ENCODE measurements at regions of chr5 and their contacts with region 1.

Region 1: DNA sequence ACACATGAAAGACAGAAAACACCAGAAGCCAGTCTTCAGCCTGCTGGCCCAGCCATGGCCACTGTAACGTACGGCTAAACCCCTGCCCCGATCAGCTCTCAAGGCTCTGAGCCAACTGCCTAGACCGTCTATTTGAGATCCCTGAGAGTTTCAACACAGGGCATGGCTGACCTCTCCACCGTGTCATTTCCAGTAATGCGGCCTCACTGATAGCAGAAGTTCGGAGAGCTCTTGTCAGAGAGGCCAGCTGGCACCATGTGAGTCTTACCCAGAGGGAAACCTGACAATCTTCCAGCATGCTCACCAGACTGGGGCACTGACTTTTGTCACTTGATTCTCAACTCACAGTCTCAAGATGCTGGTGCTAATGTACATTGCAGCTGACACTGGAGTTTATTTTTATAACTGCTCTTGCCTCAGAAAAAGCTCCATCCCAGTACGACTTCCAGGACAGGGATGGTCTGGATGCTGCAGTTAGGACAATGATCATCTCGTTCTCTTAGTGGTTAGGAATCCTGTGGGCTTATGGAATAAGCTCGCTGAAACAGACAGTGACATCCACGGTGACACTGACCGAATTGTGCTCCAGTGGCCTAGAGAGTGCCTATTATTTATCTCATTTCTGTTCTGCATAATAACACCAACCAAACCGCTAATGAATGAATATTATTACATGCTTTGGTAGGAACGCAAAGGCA is 372.7 kb downstream of the ICE1 start:
- DNase-seq: peak; percentile 55 to 92 (median 67)
- ATAC-seq: peak; percentile 89 to 98 (median 96)
- H3K4me3 ChIP-seq: no peak overlapping the region
- H3K27ac ChIP-seq: peak overlapping the region in 9 of 12 donors; percentile 15 to 74 (median 55)
- H3K4me1 ChIP-seq: peaks cover 0 to 27% (median 5%) of the 10 kb centered on the region in 12 donors
- H3K27me3 ChIP-seq: no peaks in the 10 kb centered on the region
- CTCF ChIP-seq: no peak
- POLR2A ChIP-seq: no peak

Region 2: DNA sequence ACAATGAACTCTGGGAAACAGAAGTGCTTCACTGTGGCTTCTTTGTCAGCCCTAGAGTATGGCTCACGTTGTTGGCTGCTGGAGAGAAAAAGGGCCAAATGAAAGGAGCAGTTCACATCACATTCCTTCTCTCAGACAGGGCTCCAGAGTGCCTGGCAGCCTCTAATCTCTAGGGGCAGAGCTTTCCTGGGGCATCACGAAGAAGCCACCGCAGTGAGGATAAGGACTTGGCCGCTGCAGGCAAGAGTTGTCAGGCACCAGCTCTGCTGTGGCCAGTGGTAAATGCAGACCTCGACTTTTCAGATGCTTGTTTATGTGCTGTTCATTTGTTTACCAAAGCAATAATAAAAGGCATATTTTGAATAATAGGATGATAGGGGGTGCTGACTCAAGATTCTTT is 145.6 kb before region 1 on chr5:
- intact Hi-C with region 1: loop called in 1 of 10 experiments (anchors 10 kb)
- DNase-seq: no peak
- ATAC-seq: peak; percentile 40 to 64 (median 60)
- H3K4me3 ChIP-seq: no peak overlapping the region
- H3K27ac ChIP-seq: peak overlapping the region in 1 of 12 donors; percentile 3
- H3K4me1 ChIP-seq: peaks cover 0 to 17% (median 3%) of the 10 kb centered on the region in 12 donors
- H3K27me3 ChIP-seq: no peaks in the 10 kb centered on the region
- CTCF ChIP-seq: no peak
- POLR2A ChIP-seq: no peak

Region 3: DNA sequence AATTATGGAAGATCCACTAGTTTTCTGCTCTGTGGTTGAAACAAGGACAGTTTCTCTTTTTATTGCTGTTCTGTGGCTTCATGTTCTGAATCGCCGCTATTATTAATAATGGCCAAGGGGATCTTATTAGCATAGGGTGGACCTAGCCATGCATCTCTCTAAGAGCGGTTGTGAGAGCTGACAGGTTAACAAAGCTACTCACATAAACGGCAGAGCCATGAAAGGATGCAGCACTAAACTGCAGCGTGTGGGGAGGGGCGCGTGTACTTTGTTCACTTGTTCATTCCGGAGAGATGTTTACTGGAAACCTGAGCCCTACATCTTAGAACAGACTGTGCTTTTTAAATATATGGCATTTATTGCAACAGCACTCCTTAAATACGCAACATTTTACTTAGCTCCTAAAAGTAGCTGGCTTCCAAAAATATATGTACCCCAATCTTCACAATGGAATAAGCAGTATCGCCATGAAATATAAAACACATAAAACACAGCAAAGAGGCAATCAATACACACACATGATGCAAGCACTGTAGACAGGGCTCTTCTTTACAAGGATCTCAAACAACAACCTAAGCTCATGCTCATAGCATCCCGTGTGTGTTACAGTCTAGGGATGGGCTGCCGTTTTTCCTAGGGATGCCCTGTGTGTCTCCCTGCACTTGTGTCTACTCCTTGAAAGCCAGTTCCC is 158.5 kb after region 1 on chr5:
- intact Hi-C with region 1: no loop called
- DNase-seq: no peak
- ATAC-seq: no peak
- H3K4me3 ChIP-seq: no peak overlapping the region
- H3K27ac ChIP-seq: no peak overlapping the region
- H3K4me1 ChIP-seq: no peaks in the 10 kb centered on the region
- H3K27me3 ChIP-seq: peaks cover 0 to 8% (median 0%) of the 10 kb centered on the region in 9 donors
- CTCF ChIP-seq: no peak
- POLR2A ChIP-seq: no peak

Measured in heart left ventricle (tissue), 16 donors.